Calu3 (cell line): ENCODE measurements at regions of chr2 and their contacts with region 1.

Region 1: GRCh38 chr2:58762176-58762781 is 521.2 kb upstream of the FANCL start:
- DNase-seq: peak; percentile 79
- H3K4me3 Mint-ChIP-seq: no peak overlapping the region
- H3K27ac Mint-ChIP-seq: no peak overlapping the region
- H3K4me1 Mint-ChIP-seq: peaks cover 5% of the 10 kb centered on the region
- H3K27me3 Mint-ChIP-seq: no peaks in the 10 kb centered on the region
- CTCF ChIP-seq: peak; percentile 71

Region 2: DNA sequence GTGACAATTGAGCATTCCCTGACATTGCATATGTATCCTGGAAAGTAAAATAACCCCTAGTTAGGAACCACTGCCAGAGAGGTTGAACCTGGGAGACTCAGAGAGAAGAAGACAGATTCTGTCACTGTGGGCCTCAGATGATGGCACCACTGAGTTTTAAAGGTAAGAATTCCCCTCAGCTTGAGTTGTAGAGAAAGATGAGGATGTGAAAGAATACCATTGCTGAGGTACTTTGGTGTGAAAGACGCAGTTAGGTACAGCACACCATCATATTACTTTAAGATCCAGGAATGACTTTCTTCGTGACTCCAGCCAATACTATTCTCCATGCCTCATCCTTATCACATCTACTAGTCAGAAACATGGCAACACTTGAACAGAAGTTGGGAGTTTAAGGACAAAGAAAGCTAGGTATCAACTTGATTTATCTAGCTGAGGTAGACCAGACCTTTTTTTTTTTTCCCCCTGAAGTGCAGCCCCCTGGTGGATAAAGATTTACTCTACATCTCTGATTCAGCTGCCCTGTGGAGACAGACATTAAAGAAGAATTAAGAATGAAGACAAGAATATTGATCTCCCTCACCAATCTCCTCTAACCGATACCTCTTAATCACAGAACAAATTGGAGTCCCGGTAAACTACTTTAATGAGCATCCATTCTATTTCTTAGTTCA is 109.3 kb after region 1 on chr2:
- CTCF ChIA-PET with region 1: no interaction called
- intact Hi-C with region 1: loop called (anchors 10 kb)
- DNase-seq: no peak
- H3K4me3 Mint-ChIP-seq: no peak overlapping the region
- H3K27ac Mint-ChIP-seq: no peak overlapping the region
- H3K4me1 Mint-ChIP-seq: no peaks in the 10 kb centered on the region
- H3K27me3 Mint-ChIP-seq: peaks cover 25% of the 10 kb centered on the region
- CTCF ChIP-seq: no peak

Region 3: DNA sequence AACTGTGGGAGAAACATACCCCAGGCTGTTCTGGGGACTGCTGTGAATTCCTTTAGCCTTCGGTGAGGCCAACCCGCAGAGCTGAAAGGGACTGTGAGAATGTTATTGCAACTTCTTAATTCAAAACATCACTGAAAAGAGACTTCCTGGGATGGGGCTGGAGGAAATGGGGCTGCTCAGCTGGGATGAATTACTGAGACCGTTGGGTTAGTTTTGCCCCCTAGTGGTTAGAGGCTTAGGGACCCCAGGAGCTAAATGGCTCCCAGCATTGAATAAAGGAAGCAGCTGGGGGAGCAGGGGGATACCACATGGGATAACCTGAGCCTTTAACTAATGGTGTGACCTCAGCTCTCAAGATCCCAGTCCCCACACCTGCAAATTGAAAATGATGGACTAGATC is 420.0 kb after region 1 on chr2:
- CTCF ChIA-PET with region 1: no interaction called
- intact Hi-C with region 1: loop called (anchors 5 kb)
- DNase-seq: peak; percentile 25
- H3K4me3 Mint-ChIP-seq: no peak overlapping the region
- H3K27ac Mint-ChIP-seq: no peak overlapping the region
- H3K4me1 Mint-ChIP-seq: no peaks in the 10 kb centered on the region
- H3K27me3 Mint-ChIP-seq: peaks cover 16% of the 10 kb centered on the region
- CTCF ChIP-seq: peak; percentile 38

Region 4: DNA sequence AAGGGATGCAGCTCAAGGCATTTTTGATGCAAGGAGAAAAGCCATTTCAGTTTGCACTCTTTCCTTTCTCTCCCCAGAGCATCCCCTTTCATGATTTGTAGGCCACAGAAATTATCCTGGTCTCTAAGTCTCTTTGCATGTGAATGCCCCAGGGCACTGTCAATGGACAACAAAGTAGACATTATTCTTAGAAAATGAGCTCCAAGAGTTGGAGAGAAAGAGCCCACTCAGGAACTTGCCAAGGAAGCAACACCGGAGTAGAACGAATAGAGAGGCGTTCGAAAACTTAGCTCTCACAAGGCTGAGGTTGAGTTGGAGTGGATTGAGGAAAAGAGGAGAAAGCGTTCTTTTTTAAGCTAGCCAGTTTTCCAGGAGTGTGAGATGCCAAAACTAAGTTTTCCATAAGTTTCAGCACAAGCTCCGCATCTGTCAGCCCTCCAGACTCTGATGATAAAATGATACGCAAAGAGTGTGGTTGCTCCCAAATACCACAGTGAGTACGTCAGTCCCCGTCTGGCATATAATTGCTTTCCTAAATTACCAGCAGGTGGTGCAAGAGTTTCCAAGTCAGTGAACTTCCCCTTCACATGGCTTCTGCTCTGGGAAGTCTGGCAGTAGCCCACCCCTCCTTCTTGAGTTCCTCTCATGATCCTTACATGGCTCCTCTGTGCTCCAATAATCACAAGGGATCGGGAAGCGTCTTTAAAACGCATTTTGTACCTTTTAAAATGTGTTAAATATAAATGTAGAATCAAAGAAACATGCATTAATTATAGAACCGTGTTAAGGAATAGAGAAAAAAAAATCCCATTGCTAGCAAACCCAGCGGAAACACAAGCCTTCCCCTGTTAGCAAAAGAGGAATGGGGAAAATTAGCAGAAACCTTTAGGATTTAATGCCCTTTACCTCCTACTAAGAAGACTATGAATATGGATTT is 539.5 kb after region 1 on chr2:
- CTCF ChIA-PET with region 1: no interaction called
- intact Hi-C with region 1: loop called (anchors 10 kb)
- DNase-seq: peak; percentile 57
- H3K4me3 Mint-ChIP-seq: no peak overlapping the region
- H3K27ac Mint-ChIP-seq: no peak overlapping the region
- H3K4me1 Mint-ChIP-seq: no peaks in the 10 kb centered on the region
- H3K27me3 Mint-ChIP-seq: peaks cover 12% of the 10 kb centered on the region
- CTCF ChIP-seq: peak; percentile 31

Region 5: GRCh38 chr2:60560734-60561644 is 1798.7 kb after region 1 on chr2:
- CTCF ChIA-PET with region 1: no interaction called
- intact Hi-C with region 1: loop called (anchors 5 kb)
- DNase-seq: peak; percentile 45
- H3K4me3 Mint-ChIP-seq: no peak overlapping the region
- H3K27ac Mint-ChIP-seq: no peak overlapping the region
- H3K4me1 Mint-ChIP-seq: peaks cover 8% of the 10 kb centered on the region
- H3K27me3 Mint-ChIP-seq: peaks cover 73% of the 10 kb centered on the region
- CTCF ChIP-seq: peak; percentile 14

Region 6: DNA sequence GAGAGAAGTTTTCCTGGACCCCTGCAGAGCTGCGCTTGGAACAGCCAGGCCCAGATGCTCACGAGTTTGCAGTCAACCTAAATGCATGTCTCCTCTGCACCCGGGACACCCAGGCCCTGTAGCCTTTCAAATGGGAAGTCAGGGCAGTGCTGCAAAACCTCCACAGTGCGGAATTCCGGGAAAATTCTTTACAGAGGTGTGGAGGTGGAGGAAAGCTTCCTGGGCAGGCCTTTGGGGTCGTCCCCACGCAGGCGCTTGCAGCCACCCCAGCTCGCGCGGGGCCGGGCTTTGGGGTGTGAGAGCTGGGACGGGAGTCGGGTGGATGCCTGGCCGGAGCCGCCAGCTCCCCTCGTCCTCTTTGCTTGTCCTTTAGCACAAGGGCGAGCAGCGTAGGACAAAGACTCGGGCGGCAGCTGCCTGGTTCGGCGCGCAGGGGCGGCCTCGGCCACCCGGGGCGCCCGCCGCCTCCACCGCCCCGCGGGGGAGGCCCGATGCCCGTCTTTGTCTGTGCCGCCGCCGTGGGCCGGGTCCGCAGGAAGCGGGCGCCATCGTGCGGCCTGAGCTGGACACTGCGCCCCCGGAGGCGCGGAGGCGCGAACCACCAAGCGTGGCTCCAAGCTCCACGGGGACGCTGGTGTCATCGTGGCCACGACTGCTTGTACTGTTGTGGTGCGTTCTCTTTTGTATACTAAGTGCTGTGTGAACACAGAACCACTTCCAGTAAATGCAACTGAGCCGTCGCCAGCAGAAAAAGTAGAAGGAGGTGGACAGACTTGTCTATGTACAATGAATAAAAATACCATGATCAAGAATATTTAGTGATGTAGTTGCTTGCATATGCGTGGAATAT is 1819.4 kb after region 1 on chr2:
- CTCF ChIA-PET with region 1: no interaction called
- intact Hi-C with region 1: loop called (anchors 5 kb)
- DNase-seq: peak; percentile 81
- H3K4me3 Mint-ChIP-seq: peak overlapping the region; percentile 40
- H3K27ac Mint-ChIP-seq: no peak overlapping the region
- H3K4me1 Mint-ChIP-seq: no peaks in the 10 kb centered on the region
- H3K27me3 Mint-ChIP-seq: peaks cover 74% of the 10 kb centered on the region
- CTCF ChIP-seq: peak; percentile 91